Naive thymus-derived CD4-positive, alpha-beta T cell (primary cell): ENCODE measurements at regions of chr12 and their contacts with region 1.

Region 1: GRCh38 chr12:120469450-120470149 is at the start of gene SRSF9:
- DNase-seq: peak; percentile 96 to 100 (median 97)
- ATAC-seq: peak; percentile 95
- H3K4me3 ChIP-seq: peak within 1 kb of the TSS; percentile 78
- H3K4me3 Mint-ChIP-seq: peak within 1 kb of the TSS; percentile 75 to 99 (median 90)
- H3K27ac ChIP-seq: peak within 1 kb of the TSS; percentile 86
- H3K27ac Mint-ChIP-seq: peak within 1 kb of the TSS; percentile 71 to 96 (median 86)
- H3K4me1 ChIP-seq: peaks cover 4 to 31% of the 10 kb centered on the region in 2 donors
- H3K4me1 Mint-ChIP-seq: peaks cover 34 to 65% (median 47%) of the 10 kb centered on the region in 7 donors
- H3K27me3 ChIP-seq: no peaks in the 10 kb centered on the region
- H3K27me3 Mint-ChIP-seq: peaks cover 0 to 2% (median 0%) of the 10 kb centered on the region in 5 donors
- total RNA-seq, gene SRSF9: 136 to 191 (median 145) TPM

Region 2: GRCh38 chr12:120301962-120302815 is 167.4 kb before region 1 on chr12 and contains the start of gene SIRT4:
- CTCF ChIA-PET with region 1: interaction called, 5 read pairs
- POLR2A ChIA-PET with region 1: no interaction called
- intact Hi-C with region 1: loop called in 1 of 2 experiments (anchors 1 kb)
- DNase-seq: peak; percentile 65 to 90 (median 87)
- ATAC-seq: peak; percentile 100
- H3K4me3 ChIP-seq: peak within 1 kb of the TSS; percentile 98
- H3K4me3 Mint-ChIP-seq: peak within 1 kb of the TSS; percentile 87 to 100 (median 96)
- H3K27ac ChIP-seq: peak within 1 kb of the TSS; percentile 72
- H3K27ac Mint-ChIP-seq: peak within 1 kb of the TSS; percentile 69 to 96 (median 87)
- H3K4me1 ChIP-seq: peaks cover 0 to 4% of the 10 kb centered on the region in 2 donors
- H3K4me1 Mint-ChIP-seq: peaks cover 0 to 16% (median 10%) of the 10 kb centered on the region in 7 donors
- H3K27me3 ChIP-seq: no peaks in the 10 kb centered on the region
- H3K27me3 Mint-ChIP-seq: no peaks in the 10 kb centered on the region
- total RNA-seq, gene SIRT4: 1.6 to 6.0 (median 4.0) TPM

Region 3: DNA sequence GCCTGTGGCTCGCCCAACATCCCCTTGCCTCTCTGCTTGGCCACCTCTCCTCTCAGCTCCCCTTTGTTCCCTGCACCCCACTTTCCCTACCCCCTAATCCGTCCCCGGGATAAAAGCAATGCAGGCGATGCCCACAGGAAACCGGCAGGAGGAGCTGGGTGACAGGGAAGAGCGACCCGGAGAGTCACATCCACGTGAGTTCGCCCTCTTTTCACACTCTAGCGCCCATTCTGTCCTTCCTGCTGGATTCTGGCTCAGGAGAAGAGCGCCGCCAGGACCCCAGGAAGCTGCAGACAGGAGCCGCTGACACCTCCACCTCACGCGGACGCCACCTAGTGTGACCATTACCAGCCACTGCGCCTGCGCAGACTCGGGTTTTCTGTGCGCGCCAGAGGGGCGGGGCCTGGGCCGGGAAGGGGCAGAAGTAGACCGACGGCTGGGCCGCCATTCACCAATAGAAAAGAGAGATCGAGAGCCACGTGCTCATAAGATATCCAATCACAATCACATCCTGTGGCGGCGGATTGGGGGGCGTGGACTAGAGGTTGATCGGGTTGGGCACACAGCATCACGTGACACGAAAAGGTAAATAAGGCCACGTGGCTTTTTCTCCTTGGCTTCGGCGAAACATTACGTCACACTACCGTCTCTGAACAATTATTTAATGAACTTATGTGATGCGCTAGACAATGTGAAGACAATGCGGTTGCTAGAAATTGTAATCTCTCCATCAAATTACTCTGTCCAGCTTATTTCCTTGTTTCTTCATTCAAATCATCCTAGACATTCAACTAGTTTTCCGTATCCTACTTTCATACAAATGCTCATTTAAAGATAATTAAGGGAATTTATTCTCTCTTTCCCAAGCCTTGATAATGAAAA is 152.1 kb before region 1 on chr12:
- CTCF ChIA-PET with region 1: no interaction called
- POLR2A ChIA-PET with region 1: interaction called, 3 read pairs
- intact Hi-C with region 1: loop called (anchors 1 to 2 kb)
- DNase-seq: peak; percentile 100
- ATAC-seq: peak; percentile 100
- H3K4me3 ChIP-seq: peak overlapping the region; percentile 81
- H3K4me3 Mint-ChIP-seq: peak overlapping the region; percentile 86 to 95 (median 93)
- H3K27ac ChIP-seq: peak overlapping the region; percentile 87
- H3K27ac Mint-ChIP-seq: peak overlapping the region; percentile 85 to 99 (median 98)
- H3K4me1 ChIP-seq: peaks cover 5 to 10% of the 10 kb centered on the region in 2 donors
- H3K4me1 Mint-ChIP-seq: peaks cover 4 to 16% (median 14%) of the 10 kb centered on the region in 7 donors
- H3K27me3 ChIP-seq: no peaks in the 10 kb centered on the region
- H3K27me3 Mint-ChIP-seq: peaks cover 0 to 4% (median 0%) of the 10 kb centered on the region in 5 donors

Region 4: DNA sequence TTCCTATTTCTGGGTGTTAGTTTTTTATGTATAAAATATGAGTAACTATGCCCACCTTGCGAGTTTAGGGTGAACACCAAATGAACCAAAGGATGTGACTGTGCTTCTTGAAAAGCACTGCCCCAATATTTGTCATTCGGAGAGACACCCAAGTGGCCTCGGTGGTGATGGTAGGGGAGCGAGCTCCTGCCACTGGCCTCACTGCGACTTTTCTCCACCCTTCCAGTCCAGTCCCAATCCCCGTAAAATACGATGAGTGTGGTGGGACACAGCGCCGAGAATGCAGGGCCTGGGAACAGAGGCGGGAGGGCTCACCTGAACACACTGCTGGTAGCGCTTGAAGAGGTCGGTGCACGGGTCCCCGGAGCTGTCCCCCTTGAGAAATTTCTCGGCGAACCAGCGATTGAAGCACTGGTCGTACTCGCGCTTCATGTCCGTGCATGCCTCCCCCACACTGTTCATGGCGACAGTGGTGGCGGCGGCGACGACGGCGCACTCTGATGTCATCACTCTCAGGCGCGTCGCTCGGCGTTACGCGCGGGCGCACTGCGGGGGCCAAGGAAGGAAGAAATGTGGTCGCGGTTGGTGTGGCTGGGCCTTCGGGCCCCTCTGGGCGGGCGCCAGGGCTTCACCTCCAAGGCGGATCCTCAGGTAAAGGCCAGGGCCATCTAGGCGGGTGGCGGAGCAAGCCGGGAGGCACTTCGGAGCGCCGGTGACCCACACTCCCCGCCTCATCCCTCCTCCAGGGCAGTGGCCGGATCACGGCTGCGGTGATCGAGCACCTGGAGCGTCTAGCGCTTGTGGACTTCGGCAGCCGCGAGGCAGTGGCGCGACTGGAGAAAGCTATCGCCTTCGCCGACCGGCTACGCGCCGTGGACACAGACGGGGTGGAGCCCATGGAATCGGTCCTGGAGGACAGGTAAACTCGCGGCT is 23.4 kb before region 1 on chr12 and contains the starts of genes GATC and TRIAP1:
- CTCF ChIA-PET with region 1: interaction called, 10 read pairs
- POLR2A ChIA-PET with region 1: interaction called, 9 read pairs
- intact Hi-C with region 1: loop called (anchors 1 kb)
- DNase-seq: peak; percentile 76 to 93 (median 84)
- ATAC-seq: peak; percentile 98
- H3K4me3 ChIP-seq: peak within 1 kb of the TSS; percentile 99
- H3K4me3 Mint-ChIP-seq: peak within 1 kb of the TSS; percentile 93 to 99 (median 98)
- H3K27ac ChIP-seq: peak within 1 kb of the TSS; percentile 91
- H3K27ac Mint-ChIP-seq: peak within 1 kb of the TSS; percentile 95 to 100 (median 98)
- H3K4me1 ChIP-seq: peaks cover 15 to 24% of the 10 kb centered on the region in 2 donors
- H3K4me1 Mint-ChIP-seq: peaks cover 14 to 45% (median 29%) of the 10 kb centered on the region in 7 donors
- H3K27me3 ChIP-seq: no peaks in the 10 kb centered on the region
- H3K27me3 Mint-ChIP-seq: peaks cover 0 to 2% (median 0%) of the 10 kb centered on the region in 5 donors
- total RNA-seq, gene GATC: 21.8 to 30.6 (median 26.9) TPM
- total RNA-seq, gene TRIAP1: 15.9 to 38.0 (median 19.6) TPM

Region 5: DNA sequence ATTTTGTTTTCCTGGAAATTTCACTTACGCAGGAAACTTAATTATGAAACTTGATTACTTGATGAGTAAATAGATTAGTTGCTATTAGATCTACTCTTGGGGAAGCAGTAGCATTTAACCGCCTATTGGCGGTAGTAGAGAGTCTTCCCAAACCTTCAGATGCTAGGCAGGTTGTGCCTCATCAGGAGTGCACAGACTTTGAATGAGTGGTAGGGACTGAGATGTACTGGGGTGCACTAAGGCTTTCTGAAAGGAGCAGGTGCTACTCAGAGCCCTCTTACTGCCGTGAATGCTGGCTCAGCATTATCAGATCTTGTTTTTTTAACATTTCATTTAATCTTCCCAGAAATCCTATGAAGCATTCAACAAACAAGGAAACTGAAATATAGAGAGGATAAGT is 15.6 kb before region 1 on chr12:
- CTCF ChIA-PET with region 1: interaction called, 13 read pairs
- POLR2A ChIA-PET with region 1: interaction called, 24 read pairs
- intact Hi-C with region 1: loop called in 1 of 2 experiments (anchors 2 kb)
- DNase-seq: peak in 4 of 9 donors; percentile 23 to 41 (median 28)
- ATAC-seq: peak; percentile 90
- H3K4me3 ChIP-seq: no peak overlapping the region
- H3K4me3 Mint-ChIP-seq: no peak overlapping the region
- H3K27ac ChIP-seq: no peak overlapping the region
- H3K27ac Mint-ChIP-seq: peak overlapping the region in 3 of 9 donors; percentile 30 to 65 (median 42)
- H3K4me1 ChIP-seq: peaks cover 0 to 3% of the 10 kb centered on the region in 2 donors
- H3K4me1 Mint-ChIP-seq: peaks cover 5 to 16% (median 8%) of the 10 kb centered on the region in 7 donors
- H3K27me3 ChIP-seq: no peaks in the 10 kb centered on the region
- H3K27me3 Mint-ChIP-seq: no peaks in the 10 kb centered on the region

Region 6: GRCh38 chr12:120495723-120496412 is 26.3 kb after region 1 on chr12 and contains the start of gene DYNLL1:
- CTCF ChIA-PET with region 1: interaction called, 5 read pairs
- POLR2A ChIA-PET with region 1: interaction called, 34 read pairs
- intact Hi-C with region 1: loop called (anchors 1 kb)
- DNase-seq: peak; percentile 95 to 99 (median 97)
- ATAC-seq: peak; percentile 99
- H3K4me3 ChIP-seq: peak within 1 kb of the TSS; percentile 82
- H3K4me3 Mint-ChIP-seq: peak within 1 kb of the TSS; percentile 83 to 98 (median 94)
- H3K27ac ChIP-seq: peak within 1 kb of the TSS; percentile 84
- H3K27ac Mint-ChIP-seq: peak within 1 kb of the TSS; percentile 58 to 94 (median 90)
- H3K4me1 ChIP-seq: peaks cover 9% of the 10 kb centered on the region in 2 donors
- H3K4me1 Mint-ChIP-seq: peaks cover 13 to 48% (median 33%) of the 10 kb centered on the region in 7 donors
- H3K27me3 ChIP-seq: no peaks in the 10 kb centered on the region
- H3K27me3 Mint-ChIP-seq: no peaks in the 10 kb centered on the region
- total RNA-seq, gene DYNLL1: 35.0 to 301 (median 72.7) TPM

Region 7: GRCh38 chr12:120528861-120529525 is 59.4 kb after region 1 on chr12 and contains the start of gene COQ5:
- CTCF ChIA-PET with region 1: interaction called, 4 read pairs
- POLR2A ChIA-PET with region 1: interaction called, 9 read pairs
- intact Hi-C with region 1: loop called (anchors 1 kb)
- DNase-seq: peak; percentile 64 to 83 (median 80)
- ATAC-seq: peak; percentile 97
- H3K4me3 ChIP-seq: peak within 1 kb of the TSS; percentile 75
- H3K4me3 Mint-ChIP-seq: peak within 1 kb of the TSS; percentile 93 to 100 (median 99)
- H3K27ac ChIP-seq: peak within 1 kb of the TSS; percentile 88
- H3K27ac Mint-ChIP-seq: peak within 1 kb of the TSS; percentile 96 to 100 (median 98)
- H3K4me1 ChIP-seq: no peaks in the 10 kb centered on the region
- H3K4me1 Mint-ChIP-seq: peaks cover 10 to 30% (median 23%) of the 10 kb centered on the region in 7 donors
- H3K27me3 ChIP-seq: no peaks in the 10 kb centered on the region
- H3K27me3 Mint-ChIP-seq: no peaks in the 10 kb centered on the region
- total RNA-seq, gene COQ5: 11.3 to 26.1 (median 23.5) TPM

Region 8: GRCh38 chr12:120849765-120850164 is 380.2 kb after region 1 on chr12:
- CTCF ChIA-PET with region 1: no interaction called
- POLR2A ChIA-PET with region 1: no interaction called
- intact Hi-C with region 1: no loop called
- DNase-seq: no peak
- ATAC-seq: no peak
- H3K4me3 ChIP-seq: no peak overlapping the region
- H3K4me3 Mint-ChIP-seq: no peak overlapping the region
- H3K27ac ChIP-seq: no peak overlapping the region
- H3K27ac Mint-ChIP-seq: peak overlapping the region in 1 of 9 donors; percentile 14
- H3K4me1 ChIP-seq: peaks cover 4 to 24% of the 10 kb centered on the region in 2 donors
- H3K4me1 Mint-ChIP-seq: peaks cover 35 to 84% (median 75%) of the 10 kb centered on the region in 7 donors
- H3K27me3 ChIP-seq: no peaks in the 10 kb centered on the region
- H3K27me3 Mint-ChIP-seq: no peaks in the 10 kb centered on the region